Aorta (tissue), 5 donors: ENCODE measurements at regions of chr7 and their contacts with region 1.

Region 1: DNA sequence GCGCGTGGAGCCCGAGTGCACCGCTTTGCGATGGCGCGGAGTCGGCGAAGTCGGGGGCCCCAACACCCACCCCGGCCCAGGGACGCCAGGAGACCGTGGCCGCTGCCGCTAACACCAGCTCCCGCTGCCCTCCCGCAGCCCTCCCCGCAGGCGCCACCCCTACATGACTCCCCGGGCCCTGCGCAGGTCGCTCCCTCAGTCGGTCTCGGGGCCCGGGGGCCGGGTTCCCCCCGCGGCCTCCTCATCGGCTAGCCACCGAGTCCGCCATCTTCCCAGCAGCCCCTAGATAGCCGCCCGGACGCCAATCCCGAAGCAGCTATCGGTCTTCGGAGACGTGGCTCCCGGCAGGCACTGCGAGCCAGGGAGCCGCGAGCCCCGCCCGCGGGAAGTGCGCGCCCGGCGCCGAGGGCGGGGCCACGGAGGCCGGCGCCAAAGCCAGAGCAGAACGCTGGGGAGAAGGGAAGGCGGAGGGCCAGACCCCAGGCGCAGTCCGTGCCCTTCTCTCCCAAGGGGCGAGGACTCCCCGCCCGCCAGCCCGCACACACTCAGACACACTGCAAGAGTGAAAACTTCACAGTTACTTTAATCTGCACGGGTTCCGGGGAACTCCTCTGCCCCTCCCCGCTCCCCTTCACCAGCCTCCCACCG is at the start of gene FASTK:
- DNase-seq: peak; percentile 95
- ATAC-seq: peak; percentile 90
- H3K4me3 ChIP-seq: peak within 1 kb of the TSS; percentile 23 to 71
- H3K27ac ChIP-seq: peak within 1 kb of the TSS; percentile 20 to 81
- H3K4me1 ChIP-seq: peaks cover 0 to 3% of the 10 kb centered on the region in 2 donors
- H3K27me3 ChIP-seq: no peaks in the 10 kb centered on the region
- total RNA-seq, gene FASTK: 45.6 to 56.6 TPM

Region 2: DNA sequence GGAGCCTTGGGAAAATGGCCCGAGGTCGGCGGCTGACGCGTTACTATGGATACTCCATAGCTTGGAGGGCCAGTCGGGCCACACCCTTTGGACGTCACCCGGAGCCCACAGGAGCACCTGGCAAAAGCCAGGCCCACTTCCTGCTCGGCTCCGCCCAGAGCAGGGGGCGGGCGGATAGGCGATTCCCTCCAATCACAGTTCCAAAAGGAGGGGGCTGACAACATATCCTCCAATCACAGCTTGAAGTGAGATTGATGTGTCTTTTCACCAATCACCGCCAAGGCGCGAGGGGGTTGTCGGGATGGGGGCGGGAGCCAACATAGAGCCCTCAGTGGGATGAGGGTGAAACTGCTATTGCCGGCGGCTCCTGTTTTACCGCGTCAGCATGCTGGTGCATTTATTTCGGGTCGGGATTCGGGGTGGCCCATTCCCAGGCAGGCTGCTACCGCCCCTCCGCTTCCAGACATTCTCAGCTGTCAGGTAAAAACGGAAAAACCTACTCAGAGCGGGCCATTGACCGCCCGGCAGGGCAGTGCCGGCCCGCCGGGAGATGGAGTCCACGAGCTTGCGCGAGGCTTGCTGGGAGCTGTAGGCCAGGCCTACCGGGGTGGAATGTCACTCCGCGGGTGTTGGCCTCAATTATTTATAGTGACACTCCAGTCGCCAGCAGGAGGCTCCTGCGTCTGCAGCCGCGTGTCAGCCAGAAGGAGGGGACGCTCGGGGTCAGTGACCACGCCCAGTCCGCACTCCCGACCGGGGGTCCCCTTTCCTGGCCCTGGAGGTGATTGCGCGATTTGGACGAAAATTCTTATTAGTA is 52.3 kb before region 1 on chr7 and contains the start of gene ABCB8:
- intact Hi-C with region 1: loop called in 1 of 2 experiments (anchors 2 kb)
- DNase-seq: peak; percentile 97 to 98
- ATAC-seq: peak; percentile 98
- H3K4me3 ChIP-seq: peak within 1 kb of the TSS; percentile 62 to 81
- H3K27ac ChIP-seq: peak within 1 kb of the TSS in 1 of 2 donors; percentile 11
- H3K4me1 ChIP-seq: no peaks in the 10 kb centered on the region
- H3K27me3 ChIP-seq: no peaks in the 10 kb centered on the region
- total RNA-seq, gene ABCB8: 18.7 to 30.8 TPM

Region 3: GRCh38 chr7:151057989-151058780 is 22.5 kb before region 1 on chr7:
- intact Hi-C with region 1: loop called in 1 of 2 experiments (anchors 1 kb)
- DNase-seq: peak; percentile 99 to 100
- ATAC-seq: peak; percentile 95
- H3K4me3 ChIP-seq: peak overlapping the region; percentile 54 to 75
- H3K27ac ChIP-seq: peak overlapping the region; percentile 28 to 93
- H3K4me1 ChIP-seq: no peaks in the 10 kb centered on the region
- H3K27me3 ChIP-seq: no peaks in the 10 kb centered on the region

Region 4: GRCh38 chr7:151244196-151244840 is 163.7 kb after region 1 on chr7:
- intact Hi-C with region 1: loop called in 1 of 2 experiments (anchors 5 kb)
- DNase-seq: peak in 1 of 2 donors; percentile 79
- ATAC-seq: no peak
- H3K4me3 ChIP-seq: no peak overlapping the region
- H3K27ac ChIP-seq: no peak overlapping the region
- H3K4me1 ChIP-seq: no peaks in the 10 kb centered on the region
- H3K27me3 ChIP-seq: no peaks in the 10 kb centered on the region